Ascending aorta (tissue), 2 donors: ENCODE measurements at regions of chr1 and their contacts with region 1.

Region 1: GRCh38 chr1:114670083-114671010 is 498 bp upstream of the DENND2C start:
- DNase-seq: peak; percentile 74 to 96
- H3K4me3 ChIP-seq: peak overlapping the region; percentile 77 to 94
- H3K27ac ChIP-seq: peak overlapping the region; percentile 54 to 82
- H3K4me1 ChIP-seq: no peaks in the 10 kb centered on the region
- H3K27me3 ChIP-seq: no peaks in the 10 kb centered on the region
- CTCF ChIP-seq: peak in 2 of 3 experiments; percentile 20 to 37

Region 2: GRCh38 chr1:113978863-113979702 is 691.3 kb before region 1 on chr1 and contains the start of gene OLFML3:
- intact Hi-C with region 1: loop called (anchors 5 kb)
- DNase-seq: peak; percentile 47 to 93
- H3K4me3 ChIP-seq: peak within 1 kb of the TSS; percentile 34 to 52
- H3K27ac ChIP-seq: peak within 1 kb of the TSS; percentile 46 to 77
- H3K4me1 ChIP-seq: peaks cover 15 to 32% of the 10 kb centered on the region in 2 donors
- H3K27me3 ChIP-seq: no peaks in the 10 kb centered on the region
- CTCF ChIP-seq: peak; percentile 59 to 75 (median 70)
- total RNA-seq, gene OLFML3: 26.4 TPM

Region 3: GRCh38 chr1:114511032-114511785 is 159.1 kb before region 1 on chr1 and contains the start of gene TRIM33:
- intact Hi-C with region 1: loop called (anchors 5 kb)
- DNase-seq: peak; percentile 39 to 94
- H3K4me3 ChIP-seq: peak within 1 kb of the TSS; percentile 78 to 92
- H3K27ac ChIP-seq: peak within 1 kb of the TSS; percentile 91 to 98
- H3K4me1 ChIP-seq: peaks cover 0 to 24% of the 10 kb centered on the region in 2 donors
- H3K27me3 ChIP-seq: no peaks in the 10 kb centered on the region
- CTCF ChIP-seq: peak in 1 of 3 experiments; percentile 15
- total RNA-seq, gene TRIM33: 42.5 TPM

Region 4: GRCh38 chr1:114757455-114758250 is 87.3 kb after region 1 on chr1 and contains the start of gene CSDE1:
- intact Hi-C with region 1: loop called (anchors 1 kb)
- DNase-seq: peak; percentile 90 to 98
- H3K4me3 ChIP-seq: peak within 1 kb of the TSS; percentile 81 to 89
- H3K27ac ChIP-seq: peak within 1 kb of the TSS; percentile 99
- H3K4me1 ChIP-seq: peaks cover 0 to 29% of the 10 kb centered on the region in 2 donors
- H3K27me3 ChIP-seq: no peaks in the 10 kb centered on the region
- CTCF ChIP-seq: peak in 2 of 3 experiments; percentile 20 to 27
- total RNA-seq, gene CSDE1: 290 TPM